ENCODE measurements at regions of chr4 and their contacts with region 1.

Region 1: DNA sequence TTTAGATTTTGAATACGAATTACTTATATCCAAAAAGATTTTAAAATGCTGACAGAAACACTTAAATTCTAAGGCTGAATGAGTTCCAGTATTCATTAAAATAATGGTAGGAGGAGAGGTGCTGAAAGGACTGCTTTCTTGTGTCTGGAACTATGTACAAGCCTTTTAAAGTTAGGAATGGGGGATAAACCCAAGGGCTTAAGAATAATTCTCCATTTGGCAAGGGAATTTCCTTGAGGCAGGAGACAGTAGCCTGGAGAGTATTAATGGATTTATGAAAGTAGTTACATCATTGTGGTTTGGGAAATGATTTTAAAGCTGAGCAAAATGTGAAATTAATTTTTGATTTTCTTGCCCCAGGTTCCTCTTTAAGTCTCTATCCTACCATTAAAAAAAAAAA is 266.5 kb upstream of the KCNIP4 start:
- DNase-seq: no peak
- H3K4me3 ChIP-seq: no peak overlapping the region
- H3K27ac ChIP-seq: no peak overlapping the region
- H3K4me1 ChIP-seq: no peaks in the 10 kb centered on the region
- H3K27me3 ChIP-seq: peaks cover 1% of the 10 kb centered on the region
- CTCF ChIP-seq: no peak

Region 2: DNA sequence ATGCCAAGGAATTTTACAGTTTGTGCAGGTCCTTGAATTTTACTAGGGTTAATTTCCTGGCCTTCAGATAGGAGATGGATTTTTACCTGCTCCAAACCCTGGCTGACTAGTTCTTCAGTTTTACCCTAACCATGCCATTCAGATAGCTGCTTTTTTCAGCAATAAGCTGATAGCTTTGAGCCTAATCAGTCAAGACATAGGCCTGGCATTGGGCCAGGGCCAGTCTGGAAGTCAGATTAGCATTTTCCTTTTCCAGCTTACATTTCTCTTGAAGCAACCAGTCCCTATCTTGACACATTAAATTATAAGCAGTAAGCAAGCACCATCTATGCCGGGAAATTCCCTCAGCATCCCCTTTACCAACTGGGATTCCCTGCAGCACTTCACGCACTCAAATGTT is 123.7 kb after region 1 on chr4:
- CTCF ChIA-PET with region 1: no interaction called
- dilution Hi-C with region 1: loop called (anchors 5 kb)
- in situ Hi-C with region 1: no loop called
- intact Hi-C with region 1: no loop called
- DNase-seq: no peak
- H3K4me3 ChIP-seq: no peak overlapping the region
- H3K27ac ChIP-seq: no peak overlapping the region
- H3K4me1 ChIP-seq: peaks cover 6% of the 10 kb centered on the region
- H3K27me3 ChIP-seq: no peaks in the 10 kb centered on the region
- CTCF ChIP-seq: no peak

Measured in mammary epithelial cell (primary cell).